ENCODE measurements at regions of chr7 and their contacts with region 1.

Region 1: DNA sequence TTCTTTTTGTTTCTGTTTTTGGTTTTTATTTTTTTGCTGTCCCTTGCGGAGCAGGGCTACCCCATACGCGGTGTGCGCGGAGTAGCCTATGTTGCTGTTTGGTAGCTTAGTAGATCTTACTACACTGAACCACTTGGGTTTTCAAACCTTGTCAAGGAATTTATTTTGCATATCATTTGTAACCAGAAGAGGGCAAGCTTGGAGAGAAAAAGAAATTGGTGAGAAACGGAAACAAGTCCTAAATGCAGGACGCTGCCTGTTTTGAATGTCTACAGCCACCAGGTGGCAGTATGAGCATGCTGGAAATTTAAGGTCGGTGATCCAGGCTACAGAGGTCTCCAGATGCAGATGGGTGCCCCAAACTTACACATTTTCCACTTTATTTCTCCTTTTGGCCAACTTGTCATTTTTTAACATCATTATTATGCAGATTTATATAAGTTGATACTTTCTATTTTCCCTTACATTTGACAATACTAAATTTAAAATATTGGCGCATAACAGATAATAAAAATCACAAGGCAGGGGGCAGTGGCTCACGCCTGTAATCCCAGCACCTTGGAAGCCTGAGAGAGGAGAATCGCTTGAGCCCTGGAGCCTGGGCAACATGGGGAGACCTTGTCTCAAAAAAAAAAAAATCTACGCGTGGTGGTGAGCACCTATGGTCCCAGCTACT is 15.3 kb upstream of the TRA2A start:
- DNase-seq: peak; percentile 86
- H3K4me3 ChIP-seq: no peak overlapping the region
- H3K27ac ChIP-seq: no peak overlapping the region
- H3K4me1 ChIP-seq: no peaks in the 10 kb centered on the region
- H3K27me3 ChIP-seq: no peaks in the 10 kb centered on the region
- CTCF ChIP-seq: peak; percentile 71 to 92 (median 86)
- EP300 ChIP-seq: no peak
- POLR2A ChIP-seq: no peak

Region 2: DNA sequence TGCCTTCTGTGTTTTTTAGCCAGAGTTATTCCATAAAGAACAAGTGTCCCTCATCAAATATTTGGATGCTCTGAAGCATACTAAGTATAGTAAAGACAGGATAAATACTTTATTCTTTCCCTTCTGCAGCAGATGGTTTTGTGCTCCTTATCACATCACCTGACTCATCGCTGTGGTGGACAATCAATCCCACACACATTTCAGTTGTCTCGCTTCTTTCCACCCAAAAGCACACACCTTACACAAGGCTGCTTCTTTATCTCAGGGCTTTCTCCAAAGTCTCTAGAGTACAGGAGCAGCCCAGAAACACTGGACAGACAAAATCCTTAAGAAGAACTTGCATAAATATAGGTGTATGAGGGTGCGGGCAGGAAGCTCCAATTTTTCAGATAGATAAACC is 120.2 kb before region 1 on chr7:
- intact Hi-C with region 1: no loop called
- DNase-seq: no peak
- H3K4me3 ChIP-seq: no peak overlapping the region
- H3K27ac ChIP-seq: no peak overlapping the region
- H3K4me1 ChIP-seq: no peaks in the 10 kb centered on the region
- H3K27me3 ChIP-seq: no peaks in the 10 kb centered on the region
- CTCF ChIP-seq: no peak
- EP300 ChIP-seq: no peak
- POLR2A ChIP-seq: no peak

Region 3: DNA sequence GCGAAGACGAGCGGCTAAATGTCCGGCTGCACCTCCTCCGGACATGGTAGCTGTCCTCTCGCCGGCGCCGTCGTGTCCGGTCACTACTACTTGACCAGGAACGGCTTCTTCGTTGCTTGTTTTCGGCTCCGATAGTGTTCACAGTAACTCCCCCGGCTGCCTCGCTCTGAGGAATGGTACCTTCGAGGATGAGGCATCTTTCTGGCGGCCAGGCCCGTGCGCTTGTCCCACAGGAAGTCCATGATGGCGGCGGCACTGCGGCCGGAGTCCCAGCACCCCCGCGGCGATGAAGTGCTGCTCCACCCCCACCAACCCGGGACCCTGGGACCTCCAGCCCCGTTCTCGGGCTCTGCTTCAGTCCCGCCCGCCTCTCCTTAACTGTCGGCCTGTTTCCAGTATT is 39.1 kb after region 1 on chr7:
- intact Hi-C with region 1: no loop called
- DNase-seq: no peak
- H3K4me3 ChIP-seq: no peak overlapping the region
- H3K27ac ChIP-seq: no peak overlapping the region
- H3K4me1 ChIP-seq: no peaks in the 10 kb centered on the region
- H3K27me3 ChIP-seq: no peaks in the 10 kb centered on the region
- CTCF ChIP-seq: no peak
- EP300 ChIP-seq: no peak
- POLR2A ChIP-seq: no peak

Region 4: GRCh38 chr7:23712368-23713284 is 165.6 kb after region 1 on chr7:
- intact Hi-C with region 1: loop called (anchors 5 kb)
- DNase-seq: no peak
- H3K4me3 ChIP-seq: no peak overlapping the region
- H3K27ac ChIP-seq: no peak overlapping the region
- H3K4me1 ChIP-seq: peaks cover 0 to 4% (median 0%) of the 10 kb centered on the region in 4 donors
- H3K27me3 ChIP-seq: no peaks in the 10 kb centered on the region
- CTCF ChIP-seq: peak; percentile 33 to 60 (median 38)
- EP300 ChIP-seq: no peak
- POLR2A ChIP-seq: no peak

Region 5: DNA sequence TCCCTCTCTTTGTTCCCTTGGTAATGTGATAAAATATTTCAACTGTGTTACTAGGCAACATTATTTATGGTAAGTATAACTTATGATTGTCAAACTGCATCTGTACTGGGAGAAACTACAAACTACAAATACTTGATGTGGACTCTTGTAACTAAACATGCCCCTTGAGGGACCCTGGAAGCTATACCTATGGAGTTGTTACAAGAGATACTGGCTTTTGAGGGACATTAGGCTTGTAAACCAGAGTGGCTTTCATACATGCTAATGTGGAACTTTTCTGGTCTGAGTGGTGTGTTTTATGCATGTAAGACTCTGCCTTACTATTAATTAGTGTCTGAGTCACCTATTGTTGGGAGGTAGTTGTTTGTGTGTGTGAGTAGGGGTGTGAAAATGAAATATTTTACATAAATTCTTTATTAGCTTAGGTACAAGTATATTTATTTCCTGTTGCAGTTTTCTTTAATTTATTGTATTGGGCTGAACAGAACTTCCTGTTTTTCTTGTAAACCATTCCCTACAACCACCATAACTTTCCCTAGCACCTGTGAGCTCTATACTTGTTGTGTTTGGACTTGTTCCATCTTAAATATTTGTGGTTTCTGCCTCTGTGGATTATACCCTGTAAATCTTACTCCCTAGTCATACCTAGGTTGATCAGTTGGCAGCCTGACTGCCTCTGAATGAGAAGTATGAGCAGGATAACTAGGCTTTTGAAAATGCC is 212.8 kb after region 1 on chr7:
- intact Hi-C with region 1: no loop called
- DNase-seq: no peak
- H3K4me3 ChIP-seq: no peak overlapping the region
- H3K27ac ChIP-seq: no peak overlapping the region
- H3K4me1 ChIP-seq: no peaks in the 10 kb centered on the region
- H3K27me3 ChIP-seq: no peaks in the 10 kb centered on the region
- CTCF ChIP-seq: no peak
- EP300 ChIP-seq: no peak
- POLR2A ChIP-seq: no peak